ENCODE measurements at regions of chr20 and their contacts with region 1.

Region 1: GRCh38 chr20:50980851-50981713 is 22.5 kb downstream of the MOCS3 start:
- DNase-seq: peak; percentile 79
- ATAC-seq: peak; percentile 80
- H3K4me3 ChIP-seq: no peak overlapping the region
- H3K4me3 Mint-ChIP-seq: no peak overlapping the region
- H3K27ac ChIP-seq: no peak overlapping the region
- H3K27ac Mint-ChIP-seq: no peak overlapping the region
- H3K4me1 ChIP-seq: peaks cover 0 to 4% of the 10 kb centered on the region in 2 donors
- H3K4me1 Mint-ChIP-seq: peaks cover 3% of the 10 kb centered on the region
- H3K27me3 ChIP-seq: peaks cover 0 to 23% (median 2%) of the 10 kb centered on the region in 4 experiments
- H3K27me3 Mint-ChIP-seq: peaks cover 37% of the 10 kb centered on the region
- CTCF ChIP-seq: peak; percentile 93

Region 2: GRCh38 chr20:50992733-50993457 is 11.8 kb after region 1 on chr20:
- CTCF ChIA-PET with region 1: interaction called, 26 read pairs
- POLR2A ChIA-PET with region 1: no interaction called
- intact Hi-C with region 1: no loop called
- DNase-seq: peak; percentile 72
- ATAC-seq: peak; percentile 70
- H3K4me3 ChIP-seq: no peak overlapping the region
- H3K4me3 Mint-ChIP-seq: peak overlapping the region; percentile 5
- H3K27ac ChIP-seq: no peak overlapping the region
- H3K27ac Mint-ChIP-seq: no peak overlapping the region
- H3K4me1 ChIP-seq: peaks cover 12 to 16% of the 10 kb centered on the region in 2 donors
- H3K4me1 Mint-ChIP-seq: peaks cover 14% of the 10 kb centered on the region
- H3K27me3 ChIP-seq: no peaks in the 10 kb centered on the region
- H3K27me3 Mint-ChIP-seq: peaks cover 3% of the 10 kb centered on the region
- CTCF ChIP-seq: peak; percentile 56

Region 3: GRCh38 chr20:51624157-51624731 is 643.2 kb after region 1 on chr20:
- CTCF ChIA-PET with region 1: interaction called, 34 read pairs
- POLR2A ChIA-PET with region 1: no interaction called
- intact Hi-C with region 1: no loop called
- DNase-seq: peak; percentile 72
- ATAC-seq: peak; percentile 67
- H3K4me3 ChIP-seq: no peak overlapping the region
- H3K4me3 Mint-ChIP-seq: no peak overlapping the region
- H3K27ac ChIP-seq: no peak overlapping the region
- H3K27ac Mint-ChIP-seq: no peak overlapping the region
- H3K4me1 ChIP-seq: peaks cover 0 to 2% of the 10 kb centered on the region in 2 donors
- H3K4me1 Mint-ChIP-seq: no peaks in the 10 kb centered on the region
- H3K27me3 ChIP-seq: peaks cover 0 to 3% (median 0%) of the 10 kb centered on the region in 4 experiments
- H3K27me3 Mint-ChIP-seq: peaks cover 12% of the 10 kb centered on the region
- CTCF ChIP-seq: peak; percentile 77

Measured in B cell (primary cell).